Activated CD8-positive, alpha-beta memory T cell treated with anti-CD3 and anti-CD28 coated beads, Interleukin-2, amount 10 ng/mL, durations not matched to agents 7 days and 5 days (primary cell): ENCODE measurements at regions of chr1 and their contacts with region 1.

Region 1: GRCh38 chr1:9494929-9495758 is 44.1 kb upstream of the SLC25A33 start:
- DNase-seq: peak; percentile 73
- ATAC-seq: peak; percentile 86
- H3K4me3 Mint-ChIP-seq: peak overlapping the region; percentile 61
- H3K27ac Mint-ChIP-seq: peak overlapping the region; percentile 49
- H3K4me1 Mint-ChIP-seq: peaks cover 10% of the 10 kb centered on the region
- H3K27me3 Mint-ChIP-seq: peaks cover 33% of the 10 kb centered on the region

Region 2: DNA sequence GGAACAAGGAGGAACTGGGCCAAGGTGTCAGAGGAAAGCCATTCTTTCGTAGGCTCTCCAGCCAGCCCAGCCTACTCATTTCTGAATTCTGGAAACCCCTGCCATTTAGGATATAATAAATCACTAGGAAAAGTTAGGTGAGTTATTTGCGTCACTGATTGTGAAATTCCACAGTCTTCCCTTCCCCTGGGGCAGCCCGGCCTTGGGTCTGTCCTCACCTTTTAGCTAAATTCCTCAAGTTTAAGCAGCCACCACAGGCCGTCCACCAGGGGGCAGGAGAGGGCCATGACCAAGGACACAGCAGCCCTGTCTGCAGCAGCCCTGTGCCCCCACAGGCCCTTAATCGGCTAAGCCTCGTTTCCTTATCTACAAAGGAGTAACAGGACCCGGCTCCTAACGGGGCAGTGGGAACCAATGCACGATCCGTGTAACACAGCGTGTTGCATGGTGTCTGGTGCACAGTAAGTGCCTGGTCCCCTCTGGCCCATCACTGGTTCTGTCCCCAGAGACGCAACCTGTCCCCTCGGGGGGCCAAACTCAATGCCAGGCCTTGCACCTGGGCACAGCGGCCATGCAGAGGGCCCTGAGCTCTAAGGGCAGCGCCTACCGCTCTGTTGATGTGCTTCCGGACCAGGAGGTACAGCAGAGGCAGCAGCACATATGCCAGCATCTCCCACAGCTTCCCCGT is 384.3 kb before region 1 on chr1:
- CTCF ChIA-PET with region 1: interaction called, 14 read pairs
- DNase-seq: peak; percentile 91
- ATAC-seq: peak; percentile 81
- H3K4me3 Mint-ChIP-seq: no peak overlapping the region
- H3K27ac Mint-ChIP-seq: no peak overlapping the region
- H3K4me1 Mint-ChIP-seq: peaks cover 25% of the 10 kb centered on the region
- H3K27me3 Mint-ChIP-seq: no peaks in the 10 kb centered on the region

Region 3: DNA sequence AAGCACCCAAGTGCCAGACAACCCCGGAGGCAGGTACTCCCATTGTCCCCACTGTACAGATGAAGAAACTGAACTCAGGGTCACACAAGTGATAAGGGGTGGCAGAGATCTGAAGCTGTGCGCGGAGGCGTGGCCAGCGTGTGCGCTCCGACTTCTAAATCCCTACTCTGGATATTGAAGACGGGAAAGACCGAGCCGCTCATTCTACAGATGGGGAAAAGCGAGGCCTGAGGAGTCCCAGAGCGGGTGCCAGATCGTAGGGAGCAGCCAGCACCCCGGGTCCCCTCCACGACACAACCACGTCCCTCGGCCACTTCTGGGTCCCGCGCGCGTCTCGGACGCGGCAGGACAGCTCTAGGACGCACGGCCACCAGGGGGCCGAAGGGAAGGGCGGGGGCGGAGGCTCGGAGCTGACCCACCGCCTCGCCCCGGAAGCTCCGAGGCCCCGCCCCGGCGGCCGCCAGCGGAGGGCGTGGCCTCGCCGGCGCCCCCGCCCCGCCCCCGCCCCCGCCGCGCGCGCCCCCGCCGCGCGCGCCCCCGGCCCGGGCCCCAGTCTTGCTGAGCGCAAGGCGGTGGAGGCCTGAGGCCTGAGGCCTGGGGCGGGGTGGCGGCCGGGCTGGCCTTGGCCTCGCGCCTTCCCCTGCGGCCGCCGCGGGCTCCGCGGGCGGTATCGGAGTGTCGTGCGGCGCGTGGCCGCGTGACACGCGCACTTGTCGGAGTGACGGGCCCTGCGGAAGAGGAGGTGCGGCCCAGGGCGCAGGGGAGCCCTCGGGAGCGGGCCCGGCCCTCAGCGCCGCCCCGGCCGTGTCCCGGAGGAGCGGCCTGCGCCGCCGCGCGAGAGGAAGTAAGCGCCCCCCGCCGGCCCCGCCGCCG is 260.7 kb before region 1 on chr1 and contains the start of gene H6PD:
- CTCF ChIA-PET with region 1: interaction called, 13 read pairs
- DNase-seq: peak; percentile 82
- ATAC-seq: peak; percentile 89
- H3K4me3 Mint-ChIP-seq: peak within 1 kb of the TSS; percentile 86
- H3K27ac Mint-ChIP-seq: peak within 1 kb of the TSS; percentile 93
- H3K4me1 Mint-ChIP-seq: peaks cover 39% of the 10 kb centered on the region
- H3K27me3 Mint-ChIP-seq: peaks cover 3% of the 10 kb centered on the region
- total RNA-seq, gene H6PD: 13.2 to 13.5 TPM

Region 4: DNA sequence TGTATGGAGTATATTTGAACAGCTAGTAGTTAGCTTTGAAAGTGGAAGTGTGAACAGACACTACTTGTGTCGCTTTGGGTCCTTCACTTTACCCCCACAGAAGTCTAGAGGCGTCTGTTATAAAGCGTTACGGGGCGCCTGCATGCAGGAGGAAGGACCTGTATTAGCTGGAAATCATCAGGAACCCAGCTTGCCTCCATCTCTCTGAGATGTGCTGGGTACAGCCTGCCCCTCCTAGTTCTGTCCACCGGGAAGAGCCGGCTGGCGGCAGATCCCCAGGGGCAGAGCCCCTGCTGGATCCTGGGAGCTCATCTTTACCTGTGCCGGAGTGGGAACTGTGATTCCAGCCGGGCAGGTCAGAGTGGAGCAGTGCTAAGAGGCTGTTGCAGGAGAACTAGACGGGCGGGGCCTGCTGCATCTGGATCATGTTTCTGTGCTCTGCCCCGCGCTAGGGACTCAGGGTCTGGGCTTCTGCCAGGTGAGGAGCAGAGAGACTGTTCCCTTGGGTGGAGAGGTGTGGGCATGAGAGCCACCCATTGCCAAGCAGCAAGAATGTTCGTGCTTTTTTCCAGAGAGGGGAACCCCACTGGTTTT is 224.8 kb before region 1 on chr1:
- CTCF ChIA-PET with region 1: interaction called, 84 read pairs
- DNase-seq: no peak
- ATAC-seq: no peak
- H3K4me3 Mint-ChIP-seq: no peak overlapping the region
- H3K27ac Mint-ChIP-seq: no peak overlapping the region
- H3K4me1 Mint-ChIP-seq: peaks cover 15% of the 10 kb centered on the region
- H3K27me3 Mint-ChIP-seq: peaks cover 5% of the 10 kb centered on the region

Region 5: DNA sequence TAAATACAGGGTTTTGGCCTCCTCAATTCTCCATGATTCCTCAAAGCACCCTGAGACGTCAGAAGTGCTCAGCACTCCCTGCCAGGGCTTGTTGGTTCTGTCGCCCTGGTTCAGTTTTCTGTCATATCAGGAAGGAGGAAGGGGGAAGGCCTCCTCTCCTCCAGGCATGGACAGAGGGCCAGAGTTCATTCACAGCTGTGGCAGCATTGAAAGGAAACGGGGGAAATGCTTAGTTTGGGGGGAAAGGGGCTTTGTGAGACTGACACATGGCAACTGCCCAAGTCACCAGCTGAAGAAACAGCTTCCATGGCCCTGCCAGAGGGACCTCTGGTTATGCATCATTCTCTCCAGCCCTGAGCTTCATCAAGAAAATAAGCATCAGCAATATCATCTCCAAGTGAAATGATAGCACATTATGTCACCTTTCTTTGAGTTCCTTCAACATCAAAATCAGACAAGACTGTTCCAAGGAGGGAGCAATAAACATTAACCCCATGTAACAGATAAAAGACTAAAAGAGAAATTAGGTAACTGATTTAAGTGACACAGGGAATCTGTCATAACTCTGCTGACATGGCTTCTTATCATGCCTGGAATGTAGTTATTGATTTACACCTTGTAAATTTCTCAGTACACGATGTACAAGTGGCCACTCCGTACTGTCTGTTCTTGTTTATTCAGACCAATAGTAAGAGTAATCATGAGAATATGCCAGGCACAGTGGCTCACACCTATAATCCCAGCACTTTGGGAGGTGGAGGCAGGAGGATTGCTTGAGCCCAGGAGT is 59.1 kb before region 1 on chr1:
- CTCF ChIA-PET with region 1: no interaction called
- DNase-seq: no peak
- ATAC-seq: no peak
- H3K4me3 Mint-ChIP-seq: no peak overlapping the region
- H3K27ac Mint-ChIP-seq: no peak overlapping the region
- H3K4me1 Mint-ChIP-seq: no peaks in the 10 kb centered on the region
- H3K27me3 Mint-ChIP-seq: peaks cover 44% of the 10 kb centered on the region

Region 6: DNA sequence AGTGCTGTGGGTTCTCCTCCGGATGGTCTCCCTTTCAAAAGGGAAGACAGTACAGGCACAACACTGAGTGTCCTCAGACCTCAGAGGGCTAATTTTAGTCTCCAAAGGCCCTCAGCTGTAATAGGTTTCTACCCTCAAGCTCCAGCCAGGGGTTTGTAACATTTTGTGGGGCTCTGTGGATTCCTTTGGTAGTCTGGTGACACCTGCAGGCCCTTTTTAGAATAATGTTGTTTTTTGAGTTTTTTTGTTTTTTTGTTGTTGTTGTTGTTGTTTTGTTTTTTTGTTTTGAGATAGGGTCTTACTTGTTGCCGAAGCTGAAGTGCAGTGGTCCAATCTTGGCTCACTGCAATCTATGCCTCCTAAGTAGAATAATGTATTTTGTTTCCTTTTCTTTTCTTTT is 78.6 kb after region 1 on chr1:
- CTCF ChIA-PET with region 1: interaction called, 43 read pairs
- DNase-seq: no peak
- ATAC-seq: no peak
- H3K4me3 Mint-ChIP-seq: no peak overlapping the region
- H3K27ac Mint-ChIP-seq: no peak overlapping the region
- H3K4me1 Mint-ChIP-seq: no peaks in the 10 kb centered on the region
- H3K27me3 Mint-ChIP-seq: no peaks in the 10 kb centered on the region